ENCODE measurements at regions of chr1 and their contacts with region 1.

Region 1: GRCh38 chr1:246566128-246566812 is at the starts of genes CNST and TFB2M:
- DNase-seq: peak; percentile 100
- ATAC-seq: peak; percentile 88
- H3K4me3 ChIP-seq: peak within 1 kb of the TSS; percentile 88
- H3K27ac ChIP-seq: peak within 1 kb of the TSS; percentile 68
- H3K4me1 ChIP-seq: peaks cover 31% of the 10 kb centered on the region
- H3K27me3 ChIP-seq: no peaks in the 10 kb centered on the region
- CTCF ChIP-seq: no peak
- total RNA-seq, gene CNST: 13.5 and 15.0 TPM in 2 replicates
- total RNA-seq, gene TFB2M: 30.7 and 47.0 TPM in 2 replicates

Region 2: GRCh38 chr1:246506674-246507481 is 59.4 kb before region 1 on chr1 and contains the start of gene SMYD3:
- CTCF ChIA-PET with region 1: no interaction called
- POLR2A ChIA-PET with region 1: no interaction called
- intact Hi-C with region 1: loop called (anchors 1 kb)
- DNase-seq: peak; percentile 88
- ATAC-seq: peak; percentile 60
- H3K4me3 ChIP-seq: peak within 1 kb of the TSS; percentile 85
- H3K27ac ChIP-seq: no peak within 1 kb of the TSS
- H3K4me1 ChIP-seq: peaks cover 42% of the 10 kb centered on the region
- H3K27me3 ChIP-seq: no peaks in the 10 kb centered on the region
- CTCF ChIP-seq: peak; percentile 33; the same call in 1 of the 2 replicates
- total RNA-seq, gene SMYD3: 33.0 and 40.3 TPM in 2 replicates

Region 3: GRCh38 chr1:246608616-246609376 is 42.5 kb after region 1 on chr1:
- CTCF ChIA-PET with region 1: no interaction called
- POLR2A ChIA-PET with region 1: no interaction called
- intact Hi-C with region 1: loop called (anchors 1 kb)
- DNase-seq: peak; percentile 99
- ATAC-seq: peak; percentile 91
- H3K4me3 ChIP-seq: peak overlapping the region; percentile 17
- H3K27ac ChIP-seq: peak overlapping the region; percentile 75
- H3K4me1 ChIP-seq: peaks cover 18% of the 10 kb centered on the region
- H3K27me3 ChIP-seq: no peaks in the 10 kb centered on the region
- CTCF ChIP-seq: peak; percentile 44

Region 4: DNA sequence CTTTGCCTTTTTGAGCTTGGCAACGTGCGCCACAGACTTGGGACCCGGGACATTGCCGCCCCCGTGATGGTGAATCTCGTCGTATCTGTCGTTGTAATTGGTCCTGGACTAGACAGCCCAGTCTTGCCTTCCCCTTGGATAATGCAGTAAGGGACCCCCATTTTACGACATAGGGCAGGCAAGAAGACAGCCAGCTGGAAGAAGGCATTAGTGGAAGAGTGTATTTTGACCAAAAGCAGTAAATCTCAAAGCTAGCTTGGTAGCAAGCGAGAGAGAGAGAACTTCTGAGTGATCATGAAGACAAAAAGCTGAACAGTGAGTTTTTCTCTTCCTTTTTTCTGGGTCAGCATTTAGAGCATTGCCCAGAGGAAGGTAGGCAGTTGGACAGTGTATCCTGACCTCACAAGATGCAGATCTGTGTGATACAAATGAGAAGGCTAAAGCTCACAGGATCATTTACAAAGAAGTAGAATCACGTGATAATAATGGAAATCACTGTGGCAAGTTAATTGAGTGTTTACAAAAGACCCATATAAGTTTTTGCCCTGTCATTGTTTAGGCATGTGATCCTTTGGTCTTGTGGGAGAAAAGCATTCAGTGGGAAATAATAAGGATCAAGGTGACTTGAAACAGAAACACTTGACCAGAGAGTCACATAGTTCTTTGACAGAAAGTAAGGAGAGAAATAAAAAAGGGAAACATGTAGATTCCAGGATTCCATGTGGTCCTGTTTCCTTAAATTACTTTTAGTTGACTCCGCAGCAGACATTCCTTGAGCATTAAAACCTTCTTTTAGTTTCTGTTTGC is 66.2 kb after region 1 on chr1:
- CTCF ChIA-PET with region 1: no interaction called
- POLR2A ChIA-PET with region 1: no interaction called
- intact Hi-C with region 1: no loop called
- DNase-seq: no peak
- ATAC-seq: no peak
- H3K4me3 ChIP-seq: no peak overlapping the region
- H3K27ac ChIP-seq: no peak overlapping the region
- H3K4me1 ChIP-seq: no peaks in the 10 kb centered on the region
- H3K27me3 ChIP-seq: no peaks in the 10 kb centered on the region
- CTCF ChIP-seq: no peak

Region 5: DNA sequence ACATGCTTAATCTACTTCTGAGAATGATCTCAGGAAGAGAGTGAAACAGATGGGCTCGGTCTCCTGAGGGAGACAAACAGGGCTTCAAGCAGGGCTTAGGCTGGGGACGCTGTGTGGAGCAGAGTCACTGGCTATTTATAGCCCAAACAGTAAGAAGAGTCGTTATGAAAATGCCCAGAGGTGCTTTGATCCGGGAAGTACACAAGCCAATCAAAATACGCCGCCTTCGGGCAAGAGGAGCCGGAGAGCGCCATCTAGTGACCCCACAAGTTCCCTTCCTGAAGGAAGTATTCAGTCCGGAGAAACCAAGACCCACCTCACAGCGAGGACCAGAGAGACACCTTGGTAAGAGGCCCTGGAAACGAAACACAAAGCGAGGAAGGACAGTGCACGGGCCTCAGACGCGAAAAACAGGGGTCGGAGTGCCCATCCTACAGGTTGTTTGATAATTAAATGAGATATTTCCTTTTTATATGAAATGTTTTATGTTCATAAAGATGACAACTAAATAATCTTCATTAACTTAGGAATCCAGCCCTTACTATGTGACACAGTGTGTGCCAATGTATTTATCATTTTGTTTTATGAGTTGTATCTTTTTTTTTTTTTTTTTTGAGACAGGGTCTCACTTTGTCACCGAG is 132.9 kb after region 1 on chr1:
- CTCF ChIA-PET with region 1: no interaction called
- POLR2A ChIA-PET with region 1: interaction called, 4 read pairs
- intact Hi-C with region 1: loop called (anchors 1 kb)
- DNase-seq: peak; percentile 96
- ATAC-seq: peak; percentile 95
- H3K4me3 ChIP-seq: peak overlapping the region; percentile 39
- H3K27ac ChIP-seq: peak overlapping the region; percentile 7
- H3K4me1 ChIP-seq: peaks cover 9% of the 10 kb centered on the region
- H3K27me3 ChIP-seq: no peaks in the 10 kb centered on the region
- CTCF ChIP-seq: peak; percentile 95

Measured in PC-3 (cell line).